ENCODE measurements at regions of chr5 and their contacts with region 1.

Region 1: DNA sequence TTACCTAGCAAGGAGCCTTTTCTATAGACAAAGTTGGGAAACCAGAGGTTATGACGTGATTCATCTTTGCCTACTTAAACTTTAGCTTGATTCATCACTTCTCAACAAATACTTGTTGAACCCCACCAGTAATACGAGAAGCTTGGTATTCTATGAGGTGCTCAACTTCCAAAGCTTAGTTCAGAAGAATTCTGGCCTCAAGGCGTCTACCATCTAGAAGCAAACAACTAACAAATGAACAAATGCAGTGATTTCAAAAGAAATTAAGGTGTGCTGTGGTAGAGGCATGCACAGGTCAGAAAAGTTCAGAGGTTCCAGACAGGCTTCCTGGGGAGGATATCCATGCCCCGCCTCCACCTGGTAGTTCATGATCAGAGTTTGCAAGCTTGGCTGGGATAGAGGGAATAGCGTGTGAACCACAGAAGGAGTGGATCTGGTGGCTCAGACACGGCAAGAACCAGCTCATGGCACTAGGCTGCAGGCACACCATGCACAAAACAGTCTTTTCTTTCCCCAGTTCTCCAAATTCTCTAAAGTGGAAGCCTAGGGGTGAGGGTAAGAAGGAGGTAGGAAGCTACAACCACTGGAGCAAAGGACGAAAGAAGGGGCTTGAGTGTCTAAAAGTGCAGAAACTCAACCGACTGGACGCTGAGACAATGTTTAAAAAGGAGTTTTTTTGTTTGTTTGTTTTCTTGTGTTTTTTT is 473.0 kb downstream of the RAB3C start:
- DNase-seq: no peak
- ATAC-seq: no peak
- H3K4me3 ChIP-seq: no peak overlapping the region
- H3K27ac ChIP-seq: no peak overlapping the region
- H3K4me1 ChIP-seq: no peaks in the 10 kb centered on the region
- H3K27me3 ChIP-seq: no peaks in the 10 kb centered on the region
- CTCF ChIP-seq: no peak
- POLR2A ChIP-seq: no peak

Region 2: DNA sequence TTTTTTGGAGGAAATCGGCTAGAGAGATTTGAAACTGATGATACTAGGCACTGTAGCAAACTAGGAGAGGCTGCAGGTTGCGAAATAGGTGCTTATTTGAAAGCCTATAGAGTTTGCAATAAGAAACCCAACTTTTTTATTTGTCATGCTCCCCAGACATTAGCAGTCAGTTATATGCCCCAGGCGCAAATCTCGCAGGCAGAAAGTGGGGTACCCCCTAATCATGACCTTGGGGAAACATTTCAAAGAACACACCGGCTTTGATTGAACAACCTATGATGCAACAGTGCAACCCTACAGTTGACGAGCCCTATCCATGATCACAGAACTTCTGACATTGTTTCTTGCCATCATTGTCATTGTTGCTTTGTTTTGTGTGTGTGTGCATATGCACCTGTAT is 37.4 kb after region 1 on chr5:
- in situ Hi-C with region 1: no loop called
- intact Hi-C with region 1: loop called (anchors 5 kb)
- DNase-seq: no peak
- ATAC-seq: no peak
- H3K4me3 ChIP-seq: no peak overlapping the region
- H3K27ac ChIP-seq: peak overlapping the region in 1 of 4 donors; percentile 18
- H3K4me1 ChIP-seq: peaks cover 28 to 30% of the 10 kb centered on the region in 2 donors
- H3K27me3 ChIP-seq: no peaks in the 10 kb centered on the region
- CTCF ChIP-seq: no peak
- POLR2A ChIP-seq: no peak

Region 3: DNA sequence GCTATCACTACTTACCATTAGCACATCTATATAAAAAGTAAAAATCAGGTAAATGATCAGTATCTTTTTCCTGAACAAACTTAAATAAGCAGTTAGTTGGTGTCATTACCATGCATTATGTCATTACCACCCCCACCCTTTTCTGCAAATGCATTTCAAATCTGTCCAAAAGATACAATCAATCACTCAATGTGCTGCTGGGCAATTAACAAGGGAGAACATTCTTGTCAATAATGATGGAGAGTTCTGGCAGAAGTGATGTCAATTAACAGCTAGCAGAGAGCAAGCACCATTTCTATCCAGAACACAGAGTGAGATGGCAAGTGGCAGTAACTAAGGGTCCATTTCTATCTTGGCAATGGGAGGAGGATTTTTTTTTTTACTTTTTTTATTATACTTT is 841.2 kb after region 1 on chr5:
- in situ Hi-C with region 1: no loop called
- intact Hi-C with region 1: no loop called
- DNase-seq: no peak
- ATAC-seq: no peak
- H3K4me3 ChIP-seq: no peak overlapping the region
- H3K27ac ChIP-seq: no peak overlapping the region
- H3K4me1 ChIP-seq: no peaks in the 10 kb centered on the region
- H3K27me3 ChIP-seq: peaks cover 16 to 31% (median 22%) of the 10 kb centered on the region in 3 donors
- CTCF ChIP-seq: no peak
- POLR2A ChIP-seq: no peak